ENCODE measurements at regions of chr11 and their contacts with region 1.

Region 1: DNA sequence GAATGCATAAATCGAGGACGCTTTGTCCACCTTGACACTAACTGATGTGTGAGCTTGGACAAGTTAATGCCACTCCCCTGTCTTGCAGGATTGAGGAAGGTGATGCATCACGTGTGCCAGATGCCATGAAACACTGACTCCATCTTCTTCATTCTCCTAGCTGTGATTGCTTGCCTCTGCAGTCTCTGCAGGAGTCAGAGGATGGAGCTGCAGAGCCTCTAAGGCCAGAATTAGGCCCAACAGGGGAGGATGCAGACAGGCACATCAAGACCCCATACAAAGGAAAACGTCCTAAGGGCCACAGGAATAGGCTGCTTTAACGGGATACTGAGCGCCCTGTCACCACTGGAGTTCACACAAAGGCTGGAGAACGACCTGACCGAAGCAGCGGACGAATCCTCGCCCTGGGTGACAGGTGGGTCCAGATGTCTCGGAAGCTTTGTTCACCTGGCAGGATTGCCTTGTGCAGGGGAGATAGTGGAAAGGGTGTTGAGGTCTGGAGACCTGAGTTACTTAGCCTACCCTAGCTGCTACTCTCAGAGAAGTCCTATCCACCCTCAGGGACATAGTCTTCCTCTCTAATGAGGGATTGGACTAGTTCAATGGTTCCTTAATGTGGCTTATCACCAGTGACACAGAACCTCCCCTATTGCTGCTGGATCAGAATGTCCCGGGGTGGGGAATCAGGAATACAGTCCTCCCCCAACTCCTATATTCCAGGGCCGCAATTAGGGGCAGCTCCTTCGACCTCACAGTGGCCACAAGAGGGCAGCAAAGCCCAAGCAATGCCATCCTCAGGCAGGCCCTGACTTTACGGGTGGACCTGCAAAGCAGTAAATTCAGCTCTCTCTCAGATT is 32.4 kb downstream of the DBX1 start:
- DNase-seq: peak; percentile 66 to 70
- ATAC-seq: peak; percentile 87 to 93
- H3K4me3 ChIP-seq: no peak overlapping the region
- H3K27ac ChIP-seq: peak overlapping the region; percentile 59 to 61; a peak in 5 of 6 replicates
- H3K4me1 ChIP-seq: peaks cover 16% of the 10 kb centered on the region; the same call in 2 of the 3 replicates
- CTCF ChIP-seq: peak; percentile 83
- EP300 ChIP-seq: no peak
- POLR2A ChIP-seq: no peak
- RAD21 ChIP-seq: peak; percentile 86 to 94

Region 2: GRCh38 chr11:19919050-19919561 is 208.8 kb before region 1 on chr11:
- CTCF ChIA-PET with region 1: interaction called, 32 read pairs
- POLR2A ChIA-PET with region 1: no interaction called
- DNase-seq: peak; percentile 32 to 82
- ATAC-seq: peak; percentile 97 to 98
- H3K4me3 ChIP-seq: no peak overlapping the region
- H3K27ac ChIP-seq: peak overlapping the region; percentile 42 to 71; a peak in 5 of 6 replicates
- H3K4me1 ChIP-seq: peaks cover 33% of the 10 kb centered on the region
- CTCF ChIP-seq: no peak
- EP300 ChIP-seq: no peak
- POLR2A ChIP-seq: no peak
- RAD21 ChIP-seq: no peak

Region 3: DNA sequence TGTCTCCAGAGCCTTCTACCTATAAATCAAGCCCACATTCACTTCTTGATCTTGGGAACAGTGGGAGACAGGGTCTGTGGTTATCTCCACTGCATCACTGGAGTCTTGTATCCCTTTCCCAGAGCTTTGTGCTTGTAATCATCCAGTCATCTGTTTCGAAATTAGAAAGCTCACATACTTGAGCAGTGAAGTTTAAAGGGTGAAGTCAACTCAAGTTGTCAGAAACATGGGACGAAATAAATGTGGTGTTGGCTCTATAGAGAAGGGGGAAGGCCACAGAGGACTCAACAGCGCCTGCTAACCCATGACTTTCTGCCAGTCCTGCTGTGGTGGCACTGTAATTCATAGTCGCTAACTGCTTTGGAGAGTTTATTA is 165.1 kb before region 1 on chr11:
- CTCF ChIA-PET with region 1: interaction called, 16 read pairs
- POLR2A ChIA-PET with region 1: no interaction called
- DNase-seq: no peak
- ATAC-seq: no peak; a peak in 2 of 6 replicates
- H3K4me3 ChIP-seq: no peak overlapping the region
- H3K27ac ChIP-seq: peak overlapping the region in 1 of 2 experiments; percentile 47; a peak in 3 of 6 replicates
- H3K4me1 ChIP-seq: peaks cover 4% of the 10 kb centered on the region; the same call in 2 of the 3 replicates
- CTCF ChIP-seq: no peak
- EP300 ChIP-seq: no peak
- POLR2A ChIP-seq: no peak
- RAD21 ChIP-seq: no peak

Region 4: DNA sequence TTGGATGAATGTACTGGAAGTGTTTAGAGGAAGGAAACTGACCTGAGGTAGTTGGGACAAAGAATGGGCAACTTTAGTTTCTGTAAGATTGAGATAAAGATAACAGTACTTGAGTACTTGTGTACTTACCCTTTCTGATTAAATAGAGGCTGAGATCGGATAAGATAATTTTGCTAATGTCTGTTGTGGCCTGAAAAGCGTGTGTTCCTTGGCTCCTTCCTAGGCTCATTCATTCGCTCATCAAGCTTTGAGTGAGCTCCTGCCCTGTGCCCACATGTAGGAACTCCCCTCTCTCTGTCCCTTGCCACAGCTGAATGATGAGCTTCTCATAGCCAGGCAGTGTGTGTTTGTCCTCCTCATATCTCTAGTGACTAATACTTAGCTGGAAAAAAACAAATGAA is 85.8 kb before region 1 on chr11:
- CTCF ChIA-PET with region 1: interaction called, 16 read pairs
- POLR2A ChIA-PET with region 1: no interaction called
- DNase-seq: peak; percentile 28 to 30
- ATAC-seq: peak; percentile 47 to 81; a peak in 3 of 6 replicates
- H3K4me3 ChIP-seq: no peak overlapping the region
- H3K27ac ChIP-seq: peak overlapping the region; percentile 85 to 93
- H3K4me1 ChIP-seq: peaks cover 53% of the 10 kb centered on the region
- CTCF ChIP-seq: no peak
- EP300 ChIP-seq: no peak
- POLR2A ChIP-seq: no peak
- RAD21 ChIP-seq: no peak

Region 5: GRCh38 chr11:20116825-20117224 is 11.1 kb before region 1 on chr11:
- CTCF ChIA-PET with region 1: interaction called, 150 read pairs
- POLR2A ChIA-PET with region 1: interaction called, 5 read pairs
- DNase-seq: no peak
- ATAC-seq: no peak
- H3K4me3 ChIP-seq: no peak overlapping the region
- H3K27ac ChIP-seq: no peak overlapping the region
- H3K4me1 ChIP-seq: peaks cover 19% of the 10 kb centered on the region
- CTCF ChIP-seq: no peak
- EP300 ChIP-seq: no peak
- POLR2A ChIP-seq: no peak
- RAD21 ChIP-seq: no peak

Region 6: GRCh38 chr11:20321177-20321576 is 193.3 kb after region 1 on chr11:
- CTCF ChIA-PET with region 1: no interaction called
- POLR2A ChIA-PET with region 1: no interaction called
- DNase-seq: no peak
- ATAC-seq: no peak
- H3K4me3 ChIP-seq: no peak overlapping the region
- H3K27ac ChIP-seq: no peak overlapping the region
- H3K4me1 ChIP-seq: no peaks in the 10 kb centered on the region
- CTCF ChIP-seq: no peak
- EP300 ChIP-seq: no peak
- POLR2A ChIP-seq: no peak
- RAD21 ChIP-seq: no peak

Region 7: GRCh38 chr11:20363500-20364411 is 235.9 kb after region 1 on chr11 and contains the start of gene HTATIP2:
- CTCF ChIA-PET with region 1: interaction called, 13 read pairs
- POLR2A ChIA-PET with region 1: no interaction called
- DNase-seq: peak; percentile 66 to 68
- ATAC-seq: peak; percentile 84 to 87
- H3K4me3 ChIP-seq: peak within 1 kb of the TSS; percentile 63
- H3K27ac ChIP-seq: peak within 1 kb of the TSS; percentile 92 to 100
- H3K4me1 ChIP-seq: peaks cover 46% of the 10 kb centered on the region
- CTCF ChIP-seq: no peak
- EP300 ChIP-seq: no peak
- POLR2A ChIP-seq: peak; percentile 58
- RAD21 ChIP-seq: no peak
- polyA plus RNA-seq, gene HTATIP2: 238 and 308 TPM in 2 replicates